Posterior cingulate gyrus (tissue), 11 donors: ENCODE measurements at regions of chr12 and their contacts with region 1.

Region 1: DNA sequence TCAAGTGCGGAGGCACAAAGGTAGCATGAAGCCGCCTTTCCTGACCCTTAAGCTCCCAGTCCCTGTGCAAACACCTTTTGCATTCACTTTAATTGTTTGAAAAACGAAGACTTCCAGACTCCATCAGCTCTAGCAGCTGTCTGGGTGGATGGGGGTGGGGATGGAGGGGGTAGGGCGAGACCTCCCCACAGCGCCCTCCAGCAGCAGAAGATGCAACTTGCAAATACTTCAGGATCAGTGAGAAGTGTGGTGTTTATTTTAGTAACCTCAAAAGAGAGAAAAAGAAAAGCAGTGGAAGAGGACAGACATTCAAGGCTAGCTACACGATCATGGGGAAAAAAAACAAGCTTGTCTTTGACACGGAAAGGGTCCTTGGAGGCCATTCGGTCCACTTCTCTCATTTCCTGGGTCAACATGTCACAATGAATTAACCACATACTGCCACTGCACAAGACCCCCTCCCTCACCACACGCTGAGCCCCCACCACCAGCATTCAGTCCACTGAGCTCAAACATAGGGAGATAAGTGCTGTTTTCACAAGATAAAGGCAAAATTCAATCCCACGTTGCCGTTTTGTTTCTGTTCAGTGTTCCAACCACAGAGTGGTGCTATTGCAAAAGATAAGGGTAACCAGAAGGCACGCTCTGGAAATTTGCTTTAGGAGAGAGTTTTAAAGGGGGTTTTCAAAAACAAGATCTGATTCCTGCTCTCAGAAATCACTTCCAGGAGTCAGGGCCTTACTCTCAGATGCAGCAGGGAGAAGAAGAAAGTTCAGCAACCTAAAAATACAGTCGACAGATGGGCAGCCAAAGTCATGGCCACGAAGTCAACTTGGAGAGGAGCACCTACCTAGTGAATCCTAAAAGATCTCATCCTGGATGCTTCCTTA is 3.3 kb upstream of the NTF3 start:
- DNase-seq: no peak

Region 2: DNA sequence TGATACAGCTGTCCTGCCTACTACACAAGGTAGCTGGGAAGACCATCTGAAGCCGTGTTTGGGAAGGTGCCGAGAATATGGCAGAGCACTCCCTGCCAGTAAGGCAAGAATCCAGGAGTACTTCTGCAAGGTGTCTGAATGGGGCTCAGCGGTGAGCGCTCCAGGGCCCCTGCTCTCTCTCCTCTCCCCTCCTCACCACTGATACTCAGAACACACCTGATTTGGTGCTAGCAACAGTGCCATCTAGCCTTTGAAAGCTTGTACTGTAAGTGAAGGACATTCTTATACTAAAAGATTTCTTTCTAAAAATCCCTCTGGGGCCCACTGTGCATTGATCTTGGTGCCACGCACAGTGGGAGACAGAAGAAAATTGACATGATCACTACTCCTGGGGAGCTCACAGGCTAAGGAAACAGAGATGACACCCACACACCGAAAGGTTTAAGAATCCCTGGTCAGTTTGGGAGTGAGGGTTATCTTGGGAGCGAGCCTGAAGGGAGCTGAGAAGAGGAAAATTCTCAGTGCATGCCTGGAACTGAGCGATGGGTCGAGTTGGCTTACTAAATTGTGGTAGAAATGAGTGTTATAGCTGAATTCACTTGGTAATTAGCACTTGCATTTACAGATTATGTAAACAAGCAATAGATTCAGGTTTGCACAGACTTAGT is 220.2 kb after region 1 on chr12:
- intact Hi-C with region 1: loop called (anchors 2 kb)
- DNase-seq: no peak

Region 3: GRCh38 chr12:6039894-6040568 is 611.5 kb after region 1 on chr12:
- intact Hi-C with region 1: loop called (anchors 5 kb)
- DNase-seq: peak in 6 of 10 donors; percentile 42 to 93 (median 60)

Region 4: GRCh38 chr12:6470375-6471163 is 1042.0 kb after region 1 on chr12 and contains the start of gene VAMP1:
- intact Hi-C with region 1: no loop called
- DNase-seq: peak; percentile 99 to 100 (median 100)